ENCODE measurements at regions of chr6 and their contacts with region 1.

Region 1: GRCh38 chr6:100001915-100002388 is 7.9 kb upstream of the MCHR2 start:
- DNase-seq: no peak
- H3K4me3 ChIP-seq: no peak overlapping the region
- H3K27ac ChIP-seq: no peak overlapping the region
- H3K4me1 ChIP-seq: no peaks in the 10 kb centered on the region
- H3K27me3 ChIP-seq: no peaks in the 10 kb centered on the region
- CTCF ChIP-seq: peak; percentile 45 to 85 (median 77)

Region 2: DNA sequence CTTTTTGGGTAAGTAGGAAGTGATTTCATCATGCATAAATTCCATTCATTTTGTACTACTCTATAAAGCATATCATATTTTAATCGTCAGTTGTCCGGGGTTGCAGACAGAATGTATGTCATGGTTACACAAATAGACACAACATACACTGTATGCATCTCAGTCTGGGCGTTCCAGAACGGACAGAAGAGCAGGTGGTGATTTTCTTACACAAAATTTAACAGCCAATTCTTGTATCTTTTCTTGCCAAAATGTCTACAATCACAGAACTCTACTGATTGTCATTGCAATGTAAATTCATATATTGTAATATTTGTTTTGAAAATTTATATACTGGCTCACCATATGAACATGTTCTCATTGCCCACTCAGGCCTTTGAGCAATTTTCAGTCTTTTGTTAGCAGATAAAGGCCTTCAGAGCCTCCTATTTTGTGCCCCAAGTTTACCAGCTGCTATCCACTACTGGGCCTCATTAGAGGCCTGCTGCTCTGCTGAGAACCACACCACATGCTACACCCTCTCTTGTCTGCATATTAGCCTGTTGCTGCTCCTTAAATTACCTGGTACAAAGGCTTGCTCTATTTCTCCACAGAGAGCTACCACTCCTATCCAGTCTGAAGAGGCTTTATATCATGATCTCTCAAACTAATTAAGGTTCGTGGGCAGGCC is 333.8 kb before region 1 on chr6:
- intact Hi-C with region 1: no loop called
- DNase-seq: no peak
- H3K4me3 ChIP-seq: no peak overlapping the region
- H3K27ac ChIP-seq: no peak overlapping the region
- H3K4me1 ChIP-seq: no peaks in the 10 kb centered on the region
- H3K27me3 ChIP-seq: no peaks in the 10 kb centered on the region
- CTCF ChIP-seq: no peak

Region 3: GRCh38 chr6:100099189-100100074 is 97.5 kb after region 1 on chr6:
- intact Hi-C with region 1: loop called (anchors 2 kb)
- DNase-seq: no peak
- H3K4me3 ChIP-seq: no peak overlapping the region
- H3K27ac ChIP-seq: no peak overlapping the region
- H3K4me1 ChIP-seq: no peaks in the 10 kb centered on the region
- H3K27me3 ChIP-seq: no peaks in the 10 kb centered on the region
- CTCF ChIP-seq: peak in 2 of 3 experiments; percentile 21 to 45

Region 4: DNA sequence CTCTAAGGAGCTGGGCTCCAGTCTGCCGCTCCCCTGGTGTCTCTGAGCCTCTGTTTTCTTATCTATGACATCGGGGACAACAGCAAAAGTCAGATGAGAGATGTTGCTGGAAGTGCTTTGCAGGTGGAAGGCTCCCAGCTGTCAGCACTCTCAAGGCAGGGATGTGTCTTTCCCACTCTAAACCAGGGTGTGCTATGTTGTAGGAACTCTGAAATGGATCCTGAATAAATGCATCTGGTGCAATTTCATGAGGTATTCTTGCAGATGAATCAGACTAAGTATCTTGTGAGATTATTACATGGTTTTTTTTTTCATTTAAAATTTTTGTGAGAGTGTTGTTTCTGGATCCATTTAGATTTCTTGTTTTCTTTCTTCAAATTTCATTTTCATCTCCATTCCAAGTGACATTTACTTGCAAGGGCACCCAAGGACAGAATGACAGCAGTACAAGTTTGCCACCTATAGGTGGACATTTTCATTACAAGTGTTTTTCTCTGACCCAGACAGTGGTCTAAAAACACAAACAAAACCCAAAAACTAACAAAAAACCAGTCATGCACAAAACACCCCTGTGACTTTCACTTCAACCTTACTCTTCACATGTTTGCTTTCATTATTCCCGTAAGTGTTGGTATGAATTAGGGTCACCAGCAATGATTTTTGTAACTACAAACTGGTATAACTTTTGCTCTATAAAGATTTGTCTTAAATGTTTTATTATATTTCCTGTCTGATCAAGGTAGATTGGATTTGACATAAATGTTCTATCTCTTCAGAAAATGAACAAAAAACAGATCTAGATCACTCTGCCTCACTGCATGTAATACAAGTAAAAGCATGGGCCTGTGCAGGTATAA is 477.5 kb after region 1 on chr6:
- intact Hi-C with region 1: loop called (anchors 1 kb)
- DNase-seq: no peak
- H3K4me3 ChIP-seq: no peak overlapping the region
- H3K27ac ChIP-seq: no peak overlapping the region
- H3K4me1 ChIP-seq: no peaks in the 10 kb centered on the region
- H3K27me3 ChIP-seq: no peaks in the 10 kb centered on the region
- CTCF ChIP-seq: peak; percentile 38 to 71 (median 57)

Region 5: DNA sequence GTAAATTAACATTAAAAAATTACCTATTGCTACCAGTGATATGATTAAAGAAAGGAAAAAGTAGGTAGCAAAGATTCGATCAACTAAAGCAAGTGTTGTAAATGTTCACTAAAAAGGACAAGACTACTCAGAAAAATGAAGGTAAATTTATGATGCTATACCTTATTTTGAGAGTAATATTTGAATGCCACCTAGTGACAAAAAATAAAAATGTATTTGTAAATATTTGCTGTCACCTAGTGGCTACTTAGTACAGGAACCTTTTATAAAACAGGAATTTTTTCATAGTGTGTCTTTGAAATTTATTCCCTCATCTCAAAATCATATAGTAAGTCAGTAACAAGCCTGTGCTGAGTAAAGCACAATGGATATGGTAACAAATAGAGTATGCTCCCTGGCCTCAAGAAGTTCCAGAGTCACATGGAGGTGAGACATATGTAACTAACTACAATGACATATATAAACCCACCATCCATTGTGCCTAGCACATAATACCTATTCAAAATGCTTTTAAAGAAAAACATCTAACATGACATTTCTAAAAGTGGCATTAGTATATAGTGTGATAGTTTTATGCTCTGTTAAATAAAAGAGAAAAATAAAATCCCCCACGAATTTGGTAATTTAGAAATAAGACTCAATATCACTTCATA is 655.9 kb after region 1 on chr6:
- intact Hi-C with region 1: loop called (anchors 10 kb)
- DNase-seq: no peak
- H3K4me3 ChIP-seq: no peak overlapping the region
- H3K27ac ChIP-seq: no peak overlapping the region
- H3K4me1 ChIP-seq: no peaks in the 10 kb centered on the region
- H3K27me3 ChIP-seq: no peaks in the 10 kb centered on the region
- CTCF ChIP-seq: peak in 2 of 3 experiments; percentile 12 to 36

Region 6: DNA sequence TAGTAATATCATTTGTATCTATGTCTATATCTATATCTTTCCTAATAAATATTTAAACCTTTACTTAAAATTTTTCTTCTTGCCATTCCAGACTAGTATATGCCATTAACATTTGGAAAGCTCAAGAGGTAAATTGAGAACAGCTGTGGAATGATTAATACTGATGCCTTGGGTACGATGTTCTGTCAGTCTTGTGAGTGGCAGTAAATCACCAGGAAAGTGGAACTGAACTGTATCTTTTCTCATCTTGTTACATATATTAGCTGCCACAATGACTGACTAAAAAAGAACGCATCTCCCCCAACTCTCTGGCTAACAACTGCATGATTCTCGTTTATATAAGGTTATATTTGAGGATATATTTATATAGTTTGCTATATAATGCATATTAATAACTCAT is 1016.2 kb after region 1 on chr6:
- intact Hi-C with region 1: no loop called
- DNase-seq: no peak
- H3K4me3 ChIP-seq: no peak overlapping the region
- H3K27ac ChIP-seq: no peak overlapping the region
- H3K4me1 ChIP-seq: no peaks in the 10 kb centered on the region
- H3K27me3 ChIP-seq: no peaks in the 10 kb centered on the region
- CTCF ChIP-seq: no peak

Measured in ascending aorta (tissue), 2 donors.